ENCODE measurements at regions of chr20 and their contacts with region 1.

Region 1: GRCh38 chr20:53707371-53708057 is 113.9 kb upstream of the ZNF217 start:
- DNase-seq: no peak
- ATAC-seq: no peak
- H3K4me3 ChIP-seq: no peak overlapping the region
- H3K27ac ChIP-seq: no peak overlapping the region
- H3K4me1 ChIP-seq: peaks cover 0 to 7% of the 10 kb centered on the region in 2 donors
- H3K27me3 ChIP-seq: no peaks in the 10 kb centered on the region
- CTCF ChIP-seq: no peak
- POLR2A ChIP-seq: no peak

Region 2: GRCh38 chr20:53606364-53606985 is 101.0 kb before region 1 on chr20:
- in situ Hi-C with region 1: no loop called
- intact Hi-C with region 1: no loop called
- DNase-seq: no peak
- ATAC-seq: peak in 1 of 2 donors; percentile 24
- H3K4me3 ChIP-seq: no peak overlapping the region
- H3K27ac ChIP-seq: no peak overlapping the region
- H3K4me1 ChIP-seq: peaks cover 0 to 5% of the 10 kb centered on the region in 2 donors
- H3K27me3 ChIP-seq: no peaks in the 10 kb centered on the region
- CTCF ChIP-seq: no peak
- POLR2A ChIP-seq: no peak

Region 3: DNA sequence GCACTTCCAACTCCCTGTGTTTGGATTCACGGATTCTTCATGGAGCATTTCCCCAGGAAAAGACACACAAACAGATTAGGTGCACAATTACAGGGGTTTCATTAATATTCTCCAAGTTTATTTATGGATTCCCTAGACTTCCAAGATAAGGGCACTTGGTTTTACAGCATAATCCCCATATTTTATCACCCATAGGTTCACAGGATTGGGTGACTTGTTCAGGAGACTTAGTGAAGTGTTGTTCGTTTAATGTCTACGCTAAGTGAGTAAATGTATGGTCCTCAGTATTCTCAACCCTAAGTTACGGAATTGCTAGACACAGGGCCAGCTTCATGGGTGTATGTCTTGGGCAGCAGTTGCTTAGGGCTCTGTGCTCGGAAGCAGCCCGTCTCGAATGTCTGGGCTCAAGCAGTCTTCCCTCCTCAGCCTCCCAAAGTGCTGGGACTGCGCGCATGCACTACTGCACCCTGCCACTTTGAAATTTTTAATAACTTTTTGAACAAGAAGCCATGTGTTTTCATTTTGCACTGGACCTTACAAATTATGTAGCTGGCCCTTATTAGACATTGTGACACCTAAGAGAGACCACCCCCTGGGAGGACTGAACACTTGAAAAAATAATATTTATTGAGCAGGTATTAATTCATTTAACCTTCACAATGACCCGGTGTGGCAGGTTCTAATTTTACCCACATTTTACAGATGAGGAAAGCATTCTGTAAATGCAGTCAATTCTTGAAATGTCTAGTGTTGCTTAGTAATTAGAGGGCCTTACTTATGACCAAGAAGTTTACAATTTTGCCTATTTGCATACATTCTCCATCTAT is 22.3 kb before region 1 on chr20:
- in situ Hi-C with region 1: no loop called
- intact Hi-C with region 1: loop called (anchors 1 kb)
- DNase-seq: no peak
- ATAC-seq: no peak
- H3K4me3 ChIP-seq: no peak overlapping the region
- H3K27ac ChIP-seq: no peak overlapping the region
- H3K4me1 ChIP-seq: no peaks in the 10 kb centered on the region
- H3K27me3 ChIP-seq: no peaks in the 10 kb centered on the region
- CTCF ChIP-seq: no peak
- POLR2A ChIP-seq: no peak